ENCODE measurements at regions of chr6 and their contacts with region 1.

Region 1: GRCh38 chr6:144590532-144590931 is 305.4 kb downstream of the UTRN start:
- DNase-seq: no peak

Region 2: GRCh38 chr6:145028144-145028818 is 437.7 kb after region 1 on chr6:
- intact Hi-C with region 1: loop called (anchors 10 kb)
- DNase-seq: no peak

Measured in cardiac septum (tissue), 1 donor.